Endothelial cell of umbilical vein (primary cell): ENCODE measurements at regions of chr20 and their contacts with region 1.

Region 1: GRCh38 chr20:20824924-20825584 is 112.6 kb upstream of the RALGAPA2 start:
- DNase-seq: peak; percentile 64
- H3K4me3 ChIP-seq: no peak overlapping the region
- H3K27ac ChIP-seq: no peak overlapping the region
- H3K4me1 ChIP-seq: peaks cover 2% of the 10 kb centered on the region
- H3K27me3 ChIP-seq: peaks cover 0 to 14% of the 10 kb centered on the region in 2 experiments
- CTCF ChIP-seq: peak; percentile 71 to 78
- POLR2A ChIP-seq: no peak

Region 2: GRCh38 chr20:20525756-20526155 is 299.3 kb before region 1 on chr20:
- CTCF ChIA-PET with region 1: no interaction called
- POLR2A ChIA-PET with region 1: no interaction called
- dilution Hi-C with region 1: no loop called
- intact Hi-C with region 1: no loop called
- DNase-seq: no peak
- H3K4me3 ChIP-seq: no peak overlapping the region
- H3K27ac ChIP-seq: no peak overlapping the region
- H3K4me1 ChIP-seq: no peaks in the 10 kb centered on the region
- H3K27me3 ChIP-seq: no peaks in the 10 kb centered on the region
- CTCF ChIP-seq: no peak
- POLR2A ChIP-seq: no peak

Region 3: GRCh38 chr20:20593447-20594170 is 231.4 kb before region 1 on chr20:
- CTCF ChIA-PET with region 1: interaction called, 52 read pairs
- POLR2A ChIA-PET with region 1: no interaction called
- dilution Hi-C with region 1: no loop called
- intact Hi-C with region 1: loop called (anchors 1 kb)
- DNase-seq: peak; percentile 35
- H3K4me3 ChIP-seq: no peak overlapping the region
- H3K27ac ChIP-seq: no peak overlapping the region
- H3K4me1 ChIP-seq: no peaks in the 10 kb centered on the region
- H3K27me3 ChIP-seq: no peaks in the 10 kb centered on the region
- CTCF ChIP-seq: peak; percentile 35 to 47
- POLR2A ChIP-seq: no peak

Region 4: GRCh38 chr20:20664795-20665589 is 160.1 kb before region 1 on chr20:
- CTCF ChIA-PET with region 1: interaction called, 78 read pairs
- POLR2A ChIA-PET with region 1: no interaction called
- dilution Hi-C with region 1: no loop called
- intact Hi-C with region 1: loop called (anchors 1 kb)
- DNase-seq: peak; percentile 77
- H3K4me3 ChIP-seq: no peak overlapping the region
- H3K27ac ChIP-seq: no peak overlapping the region
- H3K4me1 ChIP-seq: peaks cover 26% of the 10 kb centered on the region
- H3K27me3 ChIP-seq: no peaks in the 10 kb centered on the region
- CTCF ChIP-seq: peak; percentile 52 to 60
- POLR2A ChIP-seq: peak; percentile 27

Region 5: GRCh38 chr20:20712474-20713243 is 112.4 kb before region 1 on chr20 and contains the start of gene RALGAPA2:
- CTCF ChIA-PET with region 1: interaction called, 22 read pairs
- POLR2A ChIA-PET with region 1: no interaction called
- dilution Hi-C with region 1: no loop called
- intact Hi-C with region 1: loop called (anchors 1 kb)
- DNase-seq: peak; percentile 99
- H3K4me3 ChIP-seq: peak within 1 kb of the TSS; percentile 72 to 99 (median 77)
- H3K27ac ChIP-seq: peak within 1 kb of the TSS; percentile 77
- H3K4me1 ChIP-seq: peaks cover 21% of the 10 kb centered on the region
- H3K27me3 ChIP-seq: no peaks in the 10 kb centered on the region
- CTCF ChIP-seq: no peak
- POLR2A ChIP-seq: peak; percentile 36
- total RNA-seq, gene RALGAPA2: 39.7 and 46.8 TPM in 2 replicates

Region 6: DNA sequence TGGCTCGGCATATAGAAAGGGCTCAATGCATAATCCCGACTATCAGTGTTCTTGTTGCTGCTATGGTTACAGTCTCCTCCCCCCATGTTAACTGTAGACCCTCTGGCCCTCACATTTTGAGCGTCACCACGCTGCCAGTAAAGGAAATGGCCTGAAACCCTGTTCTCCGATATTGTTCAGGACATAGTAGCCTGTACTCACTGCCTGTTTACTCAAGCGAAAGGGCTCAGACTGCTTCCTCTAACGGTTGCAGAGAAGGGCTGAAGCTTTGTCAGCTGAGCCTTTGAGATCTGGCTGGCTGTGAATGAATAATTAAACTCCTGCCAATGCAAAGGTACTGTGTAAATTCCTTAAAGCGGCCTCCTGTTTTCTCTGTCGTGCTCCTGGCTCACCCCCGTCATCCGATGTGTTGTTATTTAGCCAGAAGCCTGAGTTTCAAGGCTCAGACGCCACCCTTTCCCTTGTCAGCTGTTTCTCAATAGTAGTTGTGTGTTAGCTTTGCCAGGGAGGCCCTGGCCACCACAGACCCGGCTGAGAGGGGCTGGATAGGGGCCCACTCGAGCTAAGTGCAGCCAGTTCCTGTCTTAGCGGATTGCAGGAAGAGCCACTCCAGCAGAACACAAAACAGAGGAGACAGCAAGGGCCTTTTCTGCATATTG is 81.4 kb before region 1 on chr20:
- CTCF ChIA-PET with region 1: interaction called, 11 read pairs
- POLR2A ChIA-PET with region 1: no interaction called
- dilution Hi-C with region 1: no loop called
- intact Hi-C with region 1: no loop called
- DNase-seq: peak; percentile 97
- H3K4me3 ChIP-seq: peak overlapping the region in 1 of 3 experiments; percentile 7
- H3K27ac ChIP-seq: peak overlapping the region; percentile 96
- H3K4me1 ChIP-seq: peaks cover 15% of the 10 kb centered on the region
- H3K27me3 ChIP-seq: no peaks in the 10 kb centered on the region
- CTCF ChIP-seq: no peak
- POLR2A ChIP-seq: peak; percentile 49

Region 7: GRCh38 chr20:20761301-20761700 is 63.8 kb before region 1 on chr20:
- CTCF ChIA-PET with region 1: interaction called, 18 read pairs
- POLR2A ChIA-PET with region 1: no interaction called
- dilution Hi-C with region 1: no loop called
- intact Hi-C with region 1: no loop called
- DNase-seq: peak; percentile 87
- H3K4me3 ChIP-seq: no peak overlapping the region
- H3K27ac ChIP-seq: peak overlapping the region; percentile 54
- H3K4me1 ChIP-seq: peaks cover 53% of the 10 kb centered on the region
- H3K27me3 ChIP-seq: no peaks in the 10 kb centered on the region
- CTCF ChIP-seq: no peak
- POLR2A ChIP-seq: peak; percentile 56

Region 8: DNA sequence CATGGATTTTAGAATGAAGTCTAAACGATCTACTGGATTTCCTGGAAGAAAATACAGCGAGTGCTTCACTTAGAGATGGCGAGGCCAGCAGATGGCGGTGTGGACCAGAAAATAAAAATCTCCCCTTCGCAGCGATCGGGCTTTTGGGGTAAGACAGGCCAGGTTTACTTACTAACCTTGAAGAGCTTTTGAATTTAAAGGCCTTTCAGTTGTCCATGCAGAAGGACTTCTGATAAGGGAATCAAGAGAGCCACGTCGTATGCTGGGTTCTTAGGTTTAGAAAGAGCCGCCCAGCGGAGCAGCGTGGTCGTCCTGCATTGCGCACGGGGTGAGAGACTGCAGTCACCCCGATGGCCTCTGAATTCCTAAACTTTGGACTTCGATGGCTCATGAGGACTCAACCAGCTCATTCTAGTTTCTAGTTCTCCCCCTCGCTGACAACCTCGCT is 12.5 kb after region 1 on chr20:
- CTCF ChIA-PET with region 1: interaction called, 41 read pairs
- POLR2A ChIA-PET with region 1: no interaction called
- dilution Hi-C with region 1: no loop called
- intact Hi-C with region 1: no loop called
- DNase-seq: peak; percentile 59
- H3K4me3 ChIP-seq: no peak overlapping the region
- H3K27ac ChIP-seq: no peak overlapping the region
- H3K4me1 ChIP-seq: no peaks in the 10 kb centered on the region
- H3K27me3 ChIP-seq: peaks cover 0 to 3% of the 10 kb centered on the region in 2 experiments
- CTCF ChIP-seq: peak; percentile 64 to 77
- POLR2A ChIP-seq: no peak